ENCODE measurements at regions of chr5 and their contacts with region 1.

Region 1: DNA sequence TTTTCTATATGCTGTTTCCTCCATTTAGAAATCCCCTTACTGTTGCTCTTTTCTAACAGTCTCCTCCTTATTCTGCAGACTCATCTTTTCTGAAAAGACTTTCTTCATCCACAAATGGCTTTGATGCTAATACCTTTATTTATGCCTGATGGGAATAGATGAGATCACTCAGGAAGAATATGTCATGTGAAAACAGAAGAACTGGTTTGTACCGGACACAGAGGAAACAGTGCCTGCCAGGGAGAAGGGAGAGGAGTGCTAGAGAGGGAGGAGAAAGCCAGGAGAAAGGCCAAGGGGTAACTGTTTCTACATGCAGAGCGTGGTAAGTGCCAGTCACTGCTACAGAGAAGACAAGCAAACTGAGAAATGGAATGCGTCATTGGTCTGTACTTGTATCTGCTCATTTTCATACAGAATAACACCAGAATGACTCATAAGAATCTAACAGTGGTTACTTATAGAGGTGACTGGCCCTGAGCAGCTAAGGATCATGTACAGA is 45.9 kb upstream of the PJA2 start:
- DNase-seq: peak; percentile 100
- H3K4me3 ChIP-seq: no peak overlapping the region
- H3K27ac ChIP-seq: peak overlapping the region; percentile 82
- H3K4me1 ChIP-seq: peaks cover 15% of the 10 kb centered on the region
- H3K27me3 ChIP-seq: no peaks in the 10 kb centered on the region
- CTCF ChIP-seq: no peak

Region 2: GRCh38 chr5:109516390-109516789 is 60.7 kb after region 1 on chr5:
- CTCF ChIA-PET with region 1: no interaction called
- dilution Hi-C with region 1: no loop called
- in situ Hi-C with region 1: no loop called
- intact Hi-C with region 1: no loop called
- DNase-seq: no peak
- H3K4me3 ChIP-seq: no peak overlapping the region
- H3K27ac ChIP-seq: no peak overlapping the region
- H3K4me1 ChIP-seq: no peaks in the 10 kb centered on the region
- H3K27me3 ChIP-seq: no peaks in the 10 kb centered on the region
- CTCF ChIP-seq: no peak

Region 3: GRCh38 chr5:109739741-109740728 is 284.4 kb after region 1 on chr5:
- CTCF ChIA-PET with region 1: no interaction called
- dilution Hi-C with region 1: no loop called
- in situ Hi-C with region 1: no loop called
- intact Hi-C with region 1: loop called (anchors 5 kb)
- DNase-seq: peak; percentile 58
- H3K4me3 ChIP-seq: no peak overlapping the region
- H3K27ac ChIP-seq: peak overlapping the region; percentile 25
- H3K4me1 ChIP-seq: peaks cover 36% of the 10 kb centered on the region
- H3K27me3 ChIP-seq: no peaks in the 10 kb centered on the region
- CTCF ChIP-seq: no peak